ENCODE measurements at regions of chr10 and their contacts with region 1.

Region 1: GRCh38 chr10:122342293-122343134 is 32.0 kb upstream of the PLEKHA1 start:
- DNase-seq: no peak

Region 2: DNA sequence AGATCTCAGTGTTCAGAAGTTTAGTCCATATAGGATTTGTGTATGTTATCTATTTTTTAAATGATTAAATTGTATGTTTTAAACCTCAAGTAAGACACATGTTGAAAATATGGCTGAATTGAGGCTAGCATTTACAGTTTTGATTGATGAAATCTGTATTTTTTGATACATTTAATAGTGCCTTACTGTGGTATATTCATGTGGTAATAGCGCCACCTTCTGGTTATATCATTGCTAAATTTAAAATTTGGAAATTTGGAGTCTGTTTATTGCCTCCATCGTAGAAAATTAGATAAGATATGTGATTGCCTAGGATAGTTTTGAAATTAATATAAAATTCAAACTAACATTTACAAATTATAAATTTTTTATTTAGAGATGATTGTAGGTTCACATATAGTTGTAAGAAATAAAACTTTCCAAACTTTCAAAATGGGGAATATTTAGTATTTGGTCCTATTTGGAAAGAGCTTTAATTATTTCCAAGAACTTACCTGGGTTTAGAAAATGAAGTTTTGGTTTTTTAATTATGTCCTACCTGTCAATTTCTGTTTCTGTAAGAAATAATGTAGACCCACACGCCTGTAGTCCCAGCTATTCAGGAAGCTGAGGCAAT is 92.8 kb after region 1 on chr10:
- intact Hi-C with region 1: loop called in 1 of 2 experiments (anchors 10 kb)
- DNase-seq: no peak